ENCODE measurements at regions of chr1 and their contacts with region 1.

Region 1: DNA sequence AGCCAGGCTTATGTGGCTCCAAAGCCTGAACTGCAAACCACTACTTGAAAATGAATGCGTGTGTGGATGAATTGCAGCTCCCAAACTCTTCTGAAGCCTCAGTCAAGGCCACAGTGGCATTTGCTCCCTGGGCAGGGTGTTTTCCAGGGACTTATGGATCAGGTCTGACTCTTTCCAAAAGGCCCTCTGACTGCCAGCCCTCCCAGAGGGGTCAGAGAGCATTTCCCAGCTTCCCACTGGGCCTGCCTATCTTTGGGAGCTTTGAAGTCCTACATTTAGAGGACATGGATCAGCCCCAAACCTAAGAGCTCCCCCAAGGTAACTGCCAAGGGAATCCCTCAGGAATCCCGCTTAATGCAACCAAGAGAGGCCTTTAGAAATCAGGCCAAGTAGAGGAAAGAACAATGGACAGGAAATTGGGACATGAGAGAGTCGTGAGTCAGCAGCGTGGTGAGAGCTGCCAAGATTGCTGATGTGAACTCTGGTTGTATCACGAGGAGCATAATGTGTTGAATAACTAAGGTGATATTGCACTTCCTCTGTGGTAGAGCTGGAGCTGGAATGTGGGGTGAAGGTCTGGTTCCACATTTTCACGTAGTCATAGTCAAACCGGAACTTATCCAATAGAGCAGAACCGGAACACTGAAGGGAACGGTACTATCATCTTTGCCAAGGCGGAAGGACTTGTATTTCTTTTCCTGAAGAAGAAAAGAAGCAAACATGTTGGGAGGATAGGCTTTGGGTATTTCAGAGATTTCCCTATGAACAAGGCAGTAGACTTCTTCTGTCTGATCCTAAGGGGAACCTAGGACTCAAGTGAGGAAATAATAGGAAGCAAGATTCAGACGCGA is 99.4 kb upstream of the JUN start:
- DNase-seq: peak; percentile 99
- H3K4me3 ChIP-seq: no peak overlapping the region
- H3K27ac ChIP-seq: peak overlapping the region; percentile 99
- H3K4me1 ChIP-seq: peaks cover 42% of the 10 kb centered on the region
- H3K27me3 ChIP-seq: no peaks in the 10 kb centered on the region
- CTCF ChIP-seq: no peak
- POLR2A ChIP-seq: no peak

Region 2: DNA sequence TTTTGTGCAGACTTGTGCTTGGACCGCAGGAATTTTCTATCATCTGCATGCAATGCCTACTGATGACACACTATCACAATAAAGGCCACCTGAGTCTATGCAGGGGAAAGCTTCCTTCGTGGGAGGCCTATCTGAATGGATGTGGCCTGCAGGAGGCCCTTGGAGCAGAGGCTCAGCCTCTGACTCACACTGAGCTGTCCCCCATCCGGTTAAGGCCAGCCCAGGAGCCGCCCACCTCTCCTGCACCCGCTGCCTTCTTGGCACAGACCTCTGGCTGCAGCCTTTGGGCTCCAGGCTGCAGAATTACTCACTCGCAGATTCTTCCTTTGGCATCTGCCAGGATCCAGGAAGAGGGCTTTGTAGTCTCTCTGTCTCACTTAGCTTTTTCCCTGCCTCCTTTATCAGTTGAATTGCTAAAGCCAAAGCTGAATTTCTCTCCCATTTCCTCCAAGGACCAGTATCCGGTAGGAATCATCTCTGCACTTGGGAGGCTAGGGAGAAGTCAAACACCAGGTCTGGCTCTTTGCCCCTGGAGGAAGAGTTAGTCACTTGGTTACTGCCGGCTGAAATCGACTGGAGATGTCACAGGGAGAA is 34.3 kb before region 1 on chr1:
- CTCF ChIA-PET with region 1: interaction called, 21 read pairs
- POLR2A ChIA-PET with region 1: interaction called, 5 read pairs
- dilution Hi-C with region 1: no loop called
- intact Hi-C with region 1: loop called (anchors 1 kb)
- DNase-seq: peak; percentile 95
- H3K4me3 ChIP-seq: no peak overlapping the region
- H3K27ac ChIP-seq: peak overlapping the region; percentile 95
- H3K4me1 ChIP-seq: peaks cover 30% of the 10 kb centered on the region
- H3K27me3 ChIP-seq: no peaks in the 10 kb centered on the region
- CTCF ChIP-seq: peak; percentile 8 to 24
- POLR2A ChIP-seq: no peak

Region 3: DNA sequence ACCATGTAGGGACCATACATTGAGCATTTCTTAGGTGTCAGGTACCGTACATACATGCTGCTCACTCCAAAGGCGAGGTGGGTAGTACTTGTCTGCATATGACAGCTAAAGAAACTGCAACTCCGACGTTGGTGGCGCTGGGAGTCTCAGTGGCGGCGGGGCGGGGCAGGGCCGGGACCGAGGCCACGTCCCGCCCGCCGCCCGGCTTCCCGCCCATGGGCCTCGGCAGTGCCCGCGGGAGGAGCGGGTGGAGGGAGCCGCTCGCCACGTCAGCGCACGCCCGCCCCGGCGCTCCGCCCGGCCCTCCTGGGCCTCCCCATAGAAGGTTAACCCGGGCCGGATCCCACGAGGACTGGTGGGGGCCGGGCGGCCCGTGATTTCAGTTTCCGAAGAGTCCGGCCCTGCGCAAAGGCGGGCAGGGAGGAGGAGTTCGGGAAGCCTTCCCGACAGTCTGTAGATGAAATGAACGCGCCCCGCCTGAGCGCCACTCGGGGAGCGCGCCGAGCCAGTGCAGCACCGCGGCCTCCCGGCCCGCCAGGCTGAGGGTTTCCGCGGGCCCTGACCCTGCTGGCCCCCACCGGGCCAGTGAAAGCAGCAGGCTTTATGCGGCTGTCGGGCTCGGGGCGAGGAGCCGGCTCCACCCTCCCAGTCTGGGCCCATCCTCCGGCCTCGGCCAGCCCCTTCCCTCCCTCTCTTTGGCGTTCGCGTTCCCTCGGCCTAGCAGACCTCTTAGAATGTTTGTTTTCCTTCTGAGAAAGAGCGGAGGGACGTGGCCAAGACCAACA is 20.4 kb after region 1 on chr1:
- CTCF ChIA-PET with region 1: interaction called, 5 read pairs
- POLR2A ChIA-PET with region 1: interaction called, 3 read pairs
- dilution Hi-C with region 1: no loop called
- intact Hi-C with region 1: loop called (anchors 1 kb)
- DNase-seq: peak; percentile 94
- H3K4me3 ChIP-seq: peak overlapping the region in 2 of 3 experiments; percentile 24 to 41
- H3K27ac ChIP-seq: peak overlapping the region; percentile 64
- H3K4me1 ChIP-seq: peaks cover 46% of the 10 kb centered on the region
- H3K27me3 ChIP-seq: no peaks in the 10 kb centered on the region
- CTCF ChIP-seq: no peak
- POLR2A ChIP-seq: peak; percentile 95

Region 4: DNA sequence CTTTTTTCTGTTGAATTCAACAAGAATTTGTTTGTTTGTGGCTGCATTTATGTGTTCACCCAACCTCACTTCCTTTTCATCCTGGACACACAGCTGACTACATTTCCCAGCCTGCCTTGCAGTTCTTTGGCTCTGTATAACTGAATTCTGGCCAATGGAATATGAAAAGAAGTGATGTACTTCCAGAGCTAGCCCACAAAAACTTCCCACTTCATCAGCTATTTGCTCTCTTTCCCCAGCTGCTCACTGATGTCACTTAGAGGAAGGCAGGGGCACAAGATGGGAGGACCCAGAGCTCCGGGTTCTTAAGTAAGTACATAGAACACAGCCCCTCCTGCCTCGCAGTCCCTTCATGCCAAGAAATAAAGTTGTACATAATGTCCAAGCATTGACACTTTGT is 178.6 kb after region 1 on chr1:
- CTCF ChIA-PET with region 1: interaction called, 5 read pairs
- POLR2A ChIA-PET with region 1: no interaction called
- dilution Hi-C with region 1: no loop called
- intact Hi-C with region 1: loop called (anchors 1 kb)
- DNase-seq: peak; percentile 94
- H3K4me3 ChIP-seq: peak overlapping the region in 2 of 3 experiments; percentile 1 to 62
- H3K27ac ChIP-seq: peak overlapping the region; percentile 75
- H3K4me1 ChIP-seq: peaks cover 26% of the 10 kb centered on the region
- H3K27me3 ChIP-seq: no peaks in the 10 kb centered on the region
- CTCF ChIP-seq: no peak
- POLR2A ChIP-seq: peak; percentile 47

Region 5: GRCh38 chr1:59128784-59129227 is 245.5 kb after region 1 on chr1:
- CTCF ChIA-PET with region 1: no interaction called
- POLR2A ChIA-PET with region 1: no interaction called
- dilution Hi-C with region 1: no loop called
- intact Hi-C with region 1: loop called (anchors 1 kb)
- DNase-seq: peak; percentile 77
- H3K4me3 ChIP-seq: no peak overlapping the region
- H3K27ac ChIP-seq: peak overlapping the region; percentile 87
- H3K4me1 ChIP-seq: peaks cover 32% of the 10 kb centered on the region
- H3K27me3 ChIP-seq: no peaks in the 10 kb centered on the region
- CTCF ChIP-seq: no peak
- POLR2A ChIP-seq: peak; percentile 33

Region 6: DNA sequence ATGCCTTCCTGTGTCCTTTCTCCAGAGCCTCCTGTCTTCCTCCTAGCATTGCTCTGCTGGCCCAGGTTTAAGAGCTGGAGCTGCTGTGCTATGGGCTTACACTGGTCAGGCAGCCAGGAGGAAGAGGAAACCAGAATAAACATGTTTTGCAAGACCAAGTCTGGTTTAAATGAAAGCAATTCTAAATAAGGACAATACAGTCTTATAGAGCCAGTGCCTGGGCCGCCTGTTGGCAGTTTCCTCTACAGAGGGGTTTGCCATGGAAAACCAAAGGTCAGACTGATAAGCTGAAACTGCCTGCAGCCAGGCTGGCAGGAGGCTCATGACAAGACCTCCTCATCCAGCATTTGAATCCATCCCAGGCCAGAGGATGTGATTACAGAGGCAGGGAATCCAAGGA is 320.7 kb after region 1 on chr1:
- CTCF ChIA-PET with region 1: no interaction called
- POLR2A ChIA-PET with region 1: no interaction called
- dilution Hi-C with region 1: no loop called
- intact Hi-C with region 1: no loop called
- DNase-seq: peak; percentile 78
- H3K4me3 ChIP-seq: no peak overlapping the region
- H3K27ac ChIP-seq: no peak overlapping the region
- H3K4me1 ChIP-seq: peaks cover 2% of the 10 kb centered on the region
- H3K27me3 ChIP-seq: no peaks in the 10 kb centered on the region
- CTCF ChIP-seq: no peak
- POLR2A ChIP-seq: no peak

Region 7: GRCh38 chr1:59422921-59423575 is 539.8 kb after region 1 on chr1:
- CTCF ChIA-PET with region 1: no interaction called
- POLR2A ChIA-PET with region 1: no interaction called
- dilution Hi-C with region 1: no loop called
- intact Hi-C with region 1: loop called (anchors 10 kb)
- DNase-seq: peak; percentile 97
- H3K4me3 ChIP-seq: no peak overlapping the region
- H3K27ac ChIP-seq: peak overlapping the region; percentile 13
- H3K4me1 ChIP-seq: peaks cover 10% of the 10 kb centered on the region
- H3K27me3 ChIP-seq: no peaks in the 10 kb centered on the region
- CTCF ChIP-seq: no peak
- POLR2A ChIP-seq: no peak

Region 8: GRCh38 chr1:59759156-59759925 is 876.1 kb after region 1 on chr1:
- CTCF ChIA-PET with region 1: interaction called, 7 read pairs
- POLR2A ChIA-PET with region 1: no interaction called
- dilution Hi-C with region 1: no loop called
- intact Hi-C with region 1: loop called (anchors 1 kb)
- DNase-seq: peak; percentile 85
- H3K4me3 ChIP-seq: no peak overlapping the region
- H3K27ac ChIP-seq: peak overlapping the region; percentile 44
- H3K4me1 ChIP-seq: peaks cover 5% of the 10 kb centered on the region
- H3K27me3 ChIP-seq: no peaks in the 10 kb centered on the region
- CTCF ChIP-seq: peak; percentile 86 to 92
- POLR2A ChIP-seq: no peak

Measured in endothelial cell of umbilical vein (primary cell).